Activated T-helper 1 cell treated with anti-CD3 and anti-CD28 coated beads, Interleukin-12 subunit alpha, Interleukin-12 subunit beta, Interleukin-2, Interleukin-4 antibody, amounts not matched to agents 30 ng/mL and 10 ng/mL and 1 ng/mL, durations not matched to agents 14 hours and 24 hours and 36 hours (primary cell): ENCODE measurements at regions of chrX and their contacts with region 1.

Region 1: DNA sequence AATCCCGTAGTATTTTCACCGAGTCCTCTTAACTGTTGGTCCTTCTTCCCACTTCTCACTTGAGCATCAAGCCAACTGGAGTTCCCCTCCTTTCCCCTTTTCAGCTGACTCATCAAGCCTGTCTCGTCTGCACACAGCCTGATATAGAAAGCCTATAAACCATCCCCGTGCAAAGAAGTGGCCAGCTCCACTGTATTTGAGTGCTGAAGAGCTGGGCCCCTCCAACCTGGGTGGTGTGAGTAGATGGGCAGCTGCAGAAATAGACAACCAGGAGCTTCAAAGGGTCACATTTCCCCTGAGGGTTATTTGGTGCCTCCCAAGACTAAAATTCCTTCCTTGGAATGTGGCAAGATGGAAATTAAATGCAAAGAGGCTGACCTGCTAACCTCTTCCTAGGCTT is 199.7 kb downstream of the HS6ST2 start:
- DNase-seq: no peak
- H3K4me3 Mint-ChIP-seq: no peak overlapping the region
- H3K27ac Mint-ChIP-seq: no peak overlapping the region
- H3K4me1 Mint-ChIP-seq: no peaks in the 10 kb centered on the region
- H3K27me3 Mint-ChIP-seq: no peaks in the 10 kb centered on the region

Region 2: GRCh38 chrX:132636080-132636479 is 122.7 kb before region 1 on chrX:
- intact Hi-C with region 1: no loop called
- DNase-seq: no peak
- H3K4me3 Mint-ChIP-seq: no peak overlapping the region
- H3K27ac Mint-ChIP-seq: no peak overlapping the region
- H3K4me1 Mint-ChIP-seq: no peaks in the 10 kb centered on the region
- H3K27me3 Mint-ChIP-seq: peaks cover 2% of the 10 kb centered on the region

Region 3: DNA sequence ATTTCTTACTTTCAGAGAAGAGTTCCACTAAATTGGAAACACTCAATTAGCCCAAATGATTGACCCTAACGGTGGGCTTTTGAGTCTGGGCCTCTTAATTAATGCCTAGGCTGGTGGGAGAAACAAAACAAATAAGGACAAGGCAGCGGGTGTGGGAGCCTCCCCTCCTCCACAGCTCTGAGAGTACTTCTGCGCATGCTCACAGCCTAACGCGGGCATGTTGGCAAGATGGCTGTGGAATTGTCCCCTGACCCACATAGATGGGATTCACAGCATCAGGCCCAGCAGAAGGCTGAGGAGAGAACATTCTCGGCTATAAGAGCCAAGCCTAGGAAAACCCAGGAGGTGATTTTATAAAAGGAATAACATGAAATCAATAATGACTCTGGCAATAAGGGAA is 30.5 kb before region 1 on chrX:
- intact Hi-C with region 1: no loop called
- DNase-seq: no peak
- H3K4me3 Mint-ChIP-seq: no peak overlapping the region
- H3K27ac Mint-ChIP-seq: no peak overlapping the region
- H3K4me1 Mint-ChIP-seq: no peaks in the 10 kb centered on the region
- H3K27me3 Mint-ChIP-seq: peaks cover 9% of the 10 kb centered on the region

Region 4: GRCh38 chrX:132858018-132858417 is 99.3 kb after region 1 on chrX:
- intact Hi-C with region 1: loop called (anchors 5 kb)
- DNase-seq: no peak
- H3K4me3 Mint-ChIP-seq: no peak overlapping the region
- H3K27ac Mint-ChIP-seq: peak overlapping the region; percentile 13
- H3K4me1 Mint-ChIP-seq: peaks cover 21% of the 10 kb centered on the region
- H3K27me3 Mint-ChIP-seq: no peaks in the 10 kb centered on the region

Region 5: GRCh38 chrX:132999150-132999549 is 240.4 kb after region 1 on chrX:
- intact Hi-C with region 1: no loop called
- DNase-seq: no peak
- H3K4me3 Mint-ChIP-seq: no peak overlapping the region
- H3K27ac Mint-ChIP-seq: no peak overlapping the region
- H3K4me1 Mint-ChIP-seq: no peaks in the 10 kb centered on the region
- H3K27me3 Mint-ChIP-seq: peaks cover 8% of the 10 kb centered on the region